ENCODE measurements at regions of chr7 and their contacts with region 1.

Region 1: GRCh38 chr7:121366852-121367431 is 29.2 kb downstream of the FAM3C start:
- DNase-seq: no peak

Region 2: DNA sequence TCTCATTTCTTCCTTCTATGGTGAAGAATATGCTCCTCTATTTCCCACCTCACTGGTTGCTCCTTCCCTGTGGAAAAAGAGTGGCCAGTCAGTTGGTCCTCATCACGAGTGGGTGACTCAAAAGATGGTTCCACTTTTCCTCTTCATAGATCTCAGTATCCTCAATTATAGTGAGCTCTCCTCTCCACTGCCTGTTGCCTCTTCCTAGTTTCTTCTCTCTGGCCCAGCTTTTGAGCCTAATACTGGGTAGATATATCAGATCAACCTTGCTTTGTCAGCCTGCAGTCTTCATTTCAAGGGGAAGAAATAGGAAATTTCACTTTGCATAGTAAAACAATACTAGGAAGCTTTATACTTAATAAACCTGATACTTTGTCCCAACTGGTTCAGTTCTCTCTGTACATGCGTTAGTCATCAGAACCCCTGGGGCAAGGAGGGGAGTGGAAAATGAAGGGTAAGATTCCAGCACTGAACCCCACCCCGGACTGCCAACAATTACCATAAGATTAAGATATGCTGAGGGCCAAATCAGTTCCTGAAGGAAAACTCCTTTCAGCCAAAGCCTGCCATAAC is 53.6 kb before region 1 on chr7:
- intact Hi-C with region 1: no loop called
- DNase-seq: no peak

Region 3: DNA sequence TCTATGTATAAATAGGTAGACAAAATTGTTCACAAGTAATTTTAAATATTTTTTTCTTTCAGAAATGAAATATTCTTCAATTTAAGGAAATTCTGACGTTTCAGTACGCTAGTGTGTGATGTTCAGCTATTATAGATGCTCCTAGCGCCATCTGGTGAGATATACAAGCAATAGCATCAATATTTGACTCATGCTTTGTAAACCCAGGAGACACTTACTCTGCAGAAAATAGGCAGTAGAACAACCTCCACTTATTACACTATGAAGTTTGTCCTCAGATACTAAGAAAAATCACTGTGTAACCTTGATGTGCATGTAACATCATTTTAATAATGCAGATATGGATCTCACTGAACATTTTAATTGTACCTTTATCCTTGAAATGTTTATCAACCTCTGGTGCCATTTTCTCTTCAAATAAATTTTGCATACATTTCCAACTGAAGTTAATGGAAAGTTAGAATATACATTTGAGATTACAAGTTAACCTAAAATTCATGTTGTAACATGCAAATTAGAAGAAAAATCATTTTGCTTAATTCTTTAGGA is 180.7 kb after region 1 on chr7:
- intact Hi-C with region 1: loop called (anchors 2 kb)
- DNase-seq: no peak